Dorsolateral prefrontal cortex (tissue), 120 donors: ENCODE measurements at regions of chr17 and their contacts with region 1.

Region 1: GRCh38 chr17:20226814-20227482 is 217.8 kb downstream of the SPECC1 start:
- DNase-seq: peak; percentile 70 to 94 (median 92)
- H3K4me3 ChIP-seq: peak overlapping the region in 9 of 59 donors; percentile 2 to 35 (median 16)
- H3K27ac ChIP-seq: peak overlapping the region; percentile 2 to 95 (median 84)
- H3K27me3 ChIP-seq: no peaks in the 10 kb centered on the region
- CTCF ChIP-seq: peak; percentile 58 to 98 (median 93)

Region 2: DNA sequence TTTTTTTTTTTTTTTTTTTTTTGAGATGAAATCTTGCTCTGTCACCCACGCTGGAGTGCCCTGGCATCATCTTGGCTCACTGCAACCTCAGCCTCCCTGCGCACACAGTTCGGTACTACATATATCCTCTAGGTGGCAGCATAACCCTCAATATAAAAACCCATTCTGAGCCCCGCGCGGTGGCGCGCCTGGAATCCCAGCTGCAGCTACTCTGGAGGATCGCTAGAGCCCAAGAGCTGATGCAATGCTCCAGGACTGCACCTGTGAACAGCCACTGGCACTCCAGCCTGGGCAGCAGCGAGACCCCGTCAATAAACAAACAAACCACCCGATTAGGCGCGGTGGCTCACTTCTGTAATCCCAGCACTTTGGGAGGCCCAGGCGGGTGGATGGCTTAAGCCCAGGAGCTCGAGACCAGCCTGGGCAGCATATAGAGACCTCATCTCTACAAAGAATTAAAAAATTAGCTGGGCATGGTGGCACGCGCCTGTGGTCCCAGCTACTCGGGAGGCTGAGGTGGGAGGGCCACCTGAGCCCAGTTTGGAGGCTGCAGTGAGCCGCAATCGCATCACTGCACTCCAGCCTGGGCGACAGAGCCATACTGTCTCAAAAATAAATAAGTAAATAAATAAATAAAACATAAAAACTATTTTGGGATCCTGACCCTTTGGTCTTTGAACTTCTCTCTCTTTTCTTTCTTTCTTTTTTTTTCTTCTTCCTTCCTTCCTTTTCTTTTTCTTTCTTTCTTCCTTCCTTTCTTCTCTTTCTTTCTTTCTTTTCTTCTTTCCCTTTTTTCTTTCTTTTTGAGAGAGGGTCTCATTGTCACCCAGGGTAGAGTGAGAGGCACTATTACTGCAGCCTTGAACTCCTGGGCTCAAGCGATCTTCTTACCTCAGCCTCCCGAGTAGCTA is 233.9 kb before region 1 on chr17:
- intact Hi-C with region 1: loop called in 1 of 2 experiments (anchors 5 kb)
- DNase-seq: peak; percentile 83 to 94 (median 90)
- H3K4me3 ChIP-seq: peak overlapping the region in 58 of 59 donors; percentile 23 to 65 (median 47)
- H3K27ac ChIP-seq: peak overlapping the region in 51 of 59 donors; percentile 2 to 86 (median 74)
- H3K27me3 ChIP-seq: no peaks in the 10 kb centered on the region
- CTCF ChIP-seq: peak; percentile 79 to 97 (median 91)

Region 3: GRCh38 chr17:20009302-20010098 is 217.4 kb before region 1 on chr17 and contains the start of gene SPECC1:
- intact Hi-C with region 1: loop called in 1 of 2 experiments (anchors 10 kb)
- DNase-seq: peak in 8 of 10 donors; percentile 69 to 93 (median 82)
- H3K4me3 ChIP-seq: peak within 1 kb of the TSS; percentile 65 to 99 (median 88)
- H3K27ac ChIP-seq: peak within 1 kb of the TSS; percentile 74 to 98 (median 95)
- H3K27me3 ChIP-seq: no peaks in the 10 kb centered on the region
- CTCF ChIP-seq: peak in 48 of 56 donors; percentile 3 to 100 (median 96)
- total RNA-seq, gene SPECC1: 140 to 321 (median 197) TPM

Region 4: DNA sequence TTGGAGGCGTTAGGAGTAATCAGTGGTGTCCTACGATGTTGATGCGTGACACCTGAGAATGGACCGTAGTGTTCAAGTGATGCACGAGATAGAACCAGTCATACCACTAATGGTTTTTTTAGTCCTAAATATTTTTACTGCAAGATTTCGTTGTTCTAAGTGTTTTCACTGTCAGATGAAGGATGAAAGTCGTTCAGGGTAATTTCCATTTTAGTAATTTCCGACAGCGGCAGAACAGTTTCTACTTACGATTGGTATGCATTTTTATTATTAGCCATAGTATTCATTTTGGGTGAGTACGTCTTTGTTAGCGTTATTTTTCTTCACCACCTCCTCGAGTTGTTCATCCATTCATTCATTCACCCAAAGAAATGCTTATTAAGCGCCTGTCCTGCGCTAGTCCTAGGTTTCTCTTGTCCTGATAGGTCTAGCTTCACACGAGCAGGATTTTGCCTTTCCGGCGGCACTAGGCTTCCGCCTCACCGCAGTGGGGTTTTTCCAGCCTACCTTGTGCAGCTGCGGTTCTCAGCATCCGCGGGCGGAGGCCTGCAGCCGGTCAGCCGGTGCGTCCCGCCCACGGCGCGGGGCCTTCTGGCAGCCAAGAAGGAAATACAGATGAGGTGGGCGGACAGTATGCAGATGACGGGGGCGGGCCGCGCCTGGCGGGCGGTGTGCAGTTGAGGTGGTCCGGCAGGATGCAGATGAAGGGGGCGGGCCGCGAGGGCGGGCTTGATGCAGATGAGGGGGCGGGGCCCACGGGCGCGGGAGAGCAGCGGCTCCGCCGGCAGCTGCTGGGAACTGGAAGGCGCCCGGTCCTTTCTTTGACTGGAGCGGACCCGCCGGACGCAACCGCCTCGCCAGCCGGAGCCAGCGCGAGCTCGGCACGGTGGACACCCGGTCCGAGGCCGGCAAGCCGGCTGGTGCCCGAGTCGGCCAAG is 71.4 kb before region 1 on chr17:
- intact Hi-C with region 1: loop called in 1 of 2 experiments (anchors 2 kb)
- DNase-seq: peak; percentile 77 to 98 (median 96)
- H3K4me3 ChIP-seq: peak overlapping the region; percentile 63 to 92 (median 81)
- H3K27ac ChIP-seq: peak overlapping the region in 57 of 59 donors; percentile 6 to 91 (median 81)
- H3K27me3 ChIP-seq: no peaks in the 10 kb centered on the region
- CTCF ChIP-seq: peak in 22 of 56 donors; percentile 7 to 51 (median 36)

Region 5: GRCh38 chr17:20189302-20189701 is 37.6 kb before region 1 on chr17:
- intact Hi-C with region 1: loop called in 1 of 2 experiments (anchors 5 kb)
- DNase-seq: peak; percentile 23 to 94 (median 91)
- H3K4me3 ChIP-seq: peak overlapping the region in 28 of 59 donors; percentile 0 to 45 (median 20)
- H3K27ac ChIP-seq: peak overlapping the region; percentile 84 to 99 (median 95)
- H3K27me3 ChIP-seq: no peaks in the 10 kb centered on the region
- CTCF ChIP-seq: peak in 9 of 56 donors; percentile 4 to 30 (median 12)

Region 6: GRCh38 chr17:20315821-20316220 is 88.9 kb after region 1 on chr17:
- intact Hi-C with region 1: loop called (anchors 2 to 5 kb)
- DNase-seq: no peak
- H3K4me3 ChIP-seq: no peak overlapping the region
- H3K27ac ChIP-seq: peak overlapping the region in 34 of 59 donors; percentile 1 to 66 (median 38)
- H3K27me3 ChIP-seq: no peaks in the 10 kb centered on the region
- CTCF ChIP-seq: no peak